ENCODE measurements at regions of chr2 and their contacts with region 1.

Region 1: GRCh38 chr2:10072656-10073480 is 7.3 kb downstream of the CYS1 start:
- DNase-seq: peak; percentile 88
- ATAC-seq: peak; percentile 98
- H3K4me3 ChIP-seq: no peak overlapping the region
- H3K27ac ChIP-seq: no peak overlapping the region
- H3K4me1 ChIP-seq: no peaks in the 10 kb centered on the region
- H3K27me3 ChIP-seq: peaks cover 26% of the 10 kb centered on the region
- CTCF ChIP-seq: peak; percentile 90

Region 2: GRCh38 chr2:10097352-10098148 is 24.7 kb after region 1 on chr2:
- CTCF ChIA-PET with region 1: interaction called, 86 read pairs
- POLR2A ChIA-PET with region 1: interaction called, 14 read pairs
- intact Hi-C with region 1: loop called (anchors 1 kb)
- DNase-seq: peak; percentile 77
- ATAC-seq: peak; percentile 99
- H3K4me3 ChIP-seq: no peak overlapping the region
- H3K27ac ChIP-seq: no peak overlapping the region
- H3K4me1 ChIP-seq: no peaks in the 10 kb centered on the region
- H3K27me3 ChIP-seq: no peaks in the 10 kb centered on the region
- CTCF ChIP-seq: peak; percentile 89

Region 3: GRCh38 chr2:10109311-10109710 is 36.4 kb after region 1 on chr2:
- CTCF ChIA-PET with region 1: no interaction called
- POLR2A ChIA-PET with region 1: no interaction called
- intact Hi-C with region 1: loop called (anchors 5 kb)
- DNase-seq: no peak
- ATAC-seq: no peak
- H3K4me3 ChIP-seq: no peak overlapping the region
- H3K27ac ChIP-seq: no peak overlapping the region
- H3K4me1 ChIP-seq: no peaks in the 10 kb centered on the region
- H3K27me3 ChIP-seq: no peaks in the 10 kb centered on the region
- CTCF ChIP-seq: no peak

Region 4: GRCh38 chr2:10434886-10435819 is 362.3 kb after region 1 on chr2:
- CTCF ChIA-PET with region 1: interaction called, 22 read pairs
- POLR2A ChIA-PET with region 1: no interaction called
- intact Hi-C with region 1: loop called (anchors 1 kb)
- DNase-seq: peak; percentile 81
- ATAC-seq: peak; percentile 60
- H3K4me3 ChIP-seq: no peak overlapping the region
- H3K27ac ChIP-seq: no peak overlapping the region
- H3K4me1 ChIP-seq: no peaks in the 10 kb centered on the region
- H3K27me3 ChIP-seq: no peaks in the 10 kb centered on the region
- CTCF ChIP-seq: peak; percentile 94

Region 5: GRCh38 chr2:10668402-10669012 is 595.6 kb after region 1 on chr2:
- CTCF ChIA-PET with region 1: no interaction called
- POLR2A ChIA-PET with region 1: no interaction called
- intact Hi-C with region 1: loop called (anchors 5 kb)
- DNase-seq: peak; percentile 87
- ATAC-seq: peak; percentile 63; the same call in 1 of the 2 replicates
- H3K4me3 ChIP-seq: no peak overlapping the region
- H3K27ac ChIP-seq: no peak overlapping the region
- H3K4me1 ChIP-seq: no peaks in the 10 kb centered on the region
- H3K27me3 ChIP-seq: no peaks in the 10 kb centered on the region
- CTCF ChIP-seq: peak; percentile 73

Measured in PC-3 (cell line).